ENCODE measurements at regions of chr6 and their contacts with region 1.

Region 1: GRCh38 chr6:17932330-17932852 is 55.0 kb downstream of the KIF13A start:
- DNase-seq: peak; percentile 60
- ATAC-seq: peak; percentile 89 to 90

Region 2: GRCh38 chr6:17884498-17885478 is 47.6 kb before region 1 on chr6:
- intact Hi-C with region 1: no loop called
- DNase-seq: no peak
- ATAC-seq: peak in 1 of 2 donors; percentile 56

Region 3: DNA sequence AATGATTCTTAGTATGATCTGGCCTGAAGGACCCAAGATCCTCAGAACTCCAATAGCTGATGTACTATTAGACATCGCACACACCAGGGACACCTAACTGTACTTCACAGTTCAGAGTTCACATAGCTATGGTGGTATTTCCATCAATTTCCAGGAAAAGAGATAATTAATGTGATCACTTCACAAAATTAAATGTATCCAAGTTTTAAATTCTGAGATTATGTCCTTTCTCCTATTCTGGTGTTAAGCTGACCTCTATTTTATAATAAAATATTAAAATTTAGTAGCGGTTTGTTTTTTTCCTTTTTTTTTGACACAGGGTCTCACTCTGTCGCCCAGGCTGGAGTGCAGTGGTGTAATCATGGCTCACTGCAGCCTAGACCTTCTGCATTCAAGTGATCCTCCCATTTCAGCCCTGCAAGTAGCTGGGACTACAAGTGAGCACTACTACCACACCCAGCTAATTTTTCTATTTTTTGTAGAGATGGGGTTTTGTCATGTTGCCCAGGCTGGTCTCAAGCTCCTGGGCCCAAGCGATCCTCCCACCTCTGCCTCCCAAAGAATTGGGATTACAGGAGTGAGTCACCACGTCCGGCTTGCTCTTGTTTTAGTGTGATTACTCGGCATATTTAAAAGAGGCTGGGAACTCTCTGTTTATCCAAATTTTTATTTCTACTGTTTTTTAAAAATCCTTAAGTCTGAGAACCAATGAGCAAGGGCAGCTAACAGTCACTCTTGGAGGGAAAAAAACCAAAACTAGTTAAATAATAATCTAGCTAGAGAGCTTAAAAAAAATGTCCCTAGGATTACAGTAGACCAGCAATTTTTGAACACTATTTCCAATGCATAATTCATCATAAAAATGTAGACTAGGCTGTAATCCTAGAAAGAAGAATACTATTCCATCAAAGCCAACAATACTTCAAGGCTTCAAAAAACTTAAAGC is 39.0 kb after region 1 on chr6:
- intact Hi-C with region 1: loop called in 1 of 2 experiments (anchors 5 kb)
- DNase-seq: peak; percentile 64
- ATAC-seq: peak in 1 of 2 donors; percentile 71

Measured in left cardiac atrium (tissue), 4 donors.